Left colon (tissue), 2 donors: ENCODE measurements at regions of chr1 and their contacts with region 1.

Region 1: GRCh38 chr1:39609618-39610331 is 29.7 kb downstream of the HEYL start:
- DNase-seq: peak; percentile 40 to 69
- ATAC-seq: peak; percentile 51

Region 2: GRCh38 chr1:39653546-39654031 is 43.8 kb after region 1 on chr1:
- intact Hi-C with region 1: loop called (anchors 1 to 10 kb)
- DNase-seq: peak; percentile 62 to 82
- ATAC-seq: peak; percentile 85

Region 3: DNA sequence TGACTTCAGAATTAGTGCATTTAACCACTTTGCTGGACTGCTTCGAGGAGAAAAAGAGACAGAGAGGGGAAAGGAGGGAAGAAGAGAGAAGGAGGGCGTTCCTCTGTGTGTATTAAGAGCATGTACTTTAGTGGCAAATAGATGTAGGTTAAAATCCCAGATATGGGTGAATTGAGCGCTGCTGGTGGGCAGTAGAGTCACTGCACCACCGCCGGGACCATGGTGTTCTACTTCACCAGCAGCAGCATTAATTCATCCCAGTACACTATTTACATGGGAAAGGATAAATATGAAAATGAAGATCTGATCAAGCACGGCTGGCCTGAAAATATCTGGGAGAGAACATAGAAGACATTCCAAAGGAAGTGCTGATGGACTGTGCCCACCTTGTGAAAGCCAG is 108.0 kb after region 1 on chr1:
- intact Hi-C with region 1: loop called in 1 of 2 experiments (anchors 5 kb)
- DNase-seq: no peak
- ATAC-seq: no peak